Activated T-helper 1 cell treated with anti-CD3 and anti-CD28 coated beads, Interleukin-12 subunit alpha, Interleukin-12 subunit beta, Interleukin-2, Interleukin-4 antibody, amounts not matched to agents 30 ng/mL and 10 ng/mL and 1 ng/mL, durations not matched to agents 14 hours and 24 hours and 36 hours (primary cell): ENCODE measurements at regions of chr4 and their contacts with region 1.

Region 1: DNA sequence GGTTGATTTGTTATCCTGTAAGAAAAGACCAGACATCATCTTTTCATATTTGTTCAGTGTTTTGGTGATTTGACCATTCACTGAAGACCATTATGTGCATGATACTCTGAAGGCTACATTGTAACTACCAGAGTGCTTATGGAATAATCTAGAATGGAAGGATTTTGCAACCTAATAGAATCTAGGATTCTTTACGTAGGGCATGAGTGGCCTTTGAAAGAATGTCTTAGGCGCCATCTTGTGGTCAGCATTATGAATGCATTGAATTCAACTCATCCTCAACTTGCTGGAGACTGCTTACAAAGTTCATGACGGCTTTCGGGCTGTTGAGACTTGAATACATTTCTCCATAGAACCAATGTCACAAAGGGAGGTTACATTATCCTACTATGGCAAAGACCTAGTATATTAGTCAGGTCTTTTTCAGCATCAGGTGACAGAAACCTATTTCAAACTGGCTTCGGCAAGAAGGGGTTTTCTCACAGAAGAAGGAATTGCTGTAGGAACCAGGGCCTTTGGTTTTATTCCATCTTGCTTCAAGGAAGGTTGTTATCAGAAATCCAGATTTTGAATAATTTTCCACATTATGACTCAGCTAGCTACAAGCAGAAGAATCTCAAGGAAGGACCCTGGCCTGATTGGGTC is 104.1 kb downstream of the GPAT3 start:
- DNase-seq: peak; percentile 31
- H3K4me3 Mint-ChIP-seq: no peak overlapping the region
- H3K27ac Mint-ChIP-seq: no peak overlapping the region
- H3K4me1 Mint-ChIP-seq: peaks cover 4% of the 10 kb centered on the region
- H3K27me3 Mint-ChIP-seq: peaks cover 6% of the 10 kb centered on the region

Region 2: DNA sequence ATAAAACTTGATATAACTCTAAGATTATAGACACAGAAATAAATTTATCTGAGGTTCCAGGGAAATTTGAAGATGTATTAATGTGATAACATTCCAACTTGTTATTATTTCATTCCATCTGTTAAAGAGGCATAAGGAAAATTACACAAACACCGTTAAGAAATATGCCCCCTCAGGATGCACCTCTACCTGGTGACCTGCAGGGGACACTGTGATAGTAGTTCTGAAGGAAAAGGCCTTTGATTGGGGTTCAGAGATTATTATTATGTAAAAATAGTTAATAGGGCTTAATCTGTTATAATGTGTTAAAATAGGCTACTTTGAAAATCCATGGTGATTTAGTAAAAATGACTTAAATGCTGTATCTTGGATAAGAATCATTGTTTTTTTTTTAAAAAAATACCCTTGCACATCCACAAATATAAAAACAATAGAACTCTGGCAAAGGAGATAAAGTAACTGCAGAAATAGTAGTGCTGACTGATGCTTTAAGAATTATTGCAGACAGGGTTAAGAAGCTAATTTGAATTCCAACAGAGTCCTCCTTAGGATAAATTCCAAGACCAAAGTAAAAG is 149.0 kb before region 1 on chr4:
- intact Hi-C with region 1: loop called (anchors 1 kb)
- DNase-seq: no peak
- H3K4me3 Mint-ChIP-seq: no peak overlapping the region
- H3K27ac Mint-ChIP-seq: no peak overlapping the region
- H3K4me1 Mint-ChIP-seq: peaks cover 15% of the 10 kb centered on the region
- H3K27me3 Mint-ChIP-seq: peaks cover 7% of the 10 kb centered on the region

Region 3: DNA sequence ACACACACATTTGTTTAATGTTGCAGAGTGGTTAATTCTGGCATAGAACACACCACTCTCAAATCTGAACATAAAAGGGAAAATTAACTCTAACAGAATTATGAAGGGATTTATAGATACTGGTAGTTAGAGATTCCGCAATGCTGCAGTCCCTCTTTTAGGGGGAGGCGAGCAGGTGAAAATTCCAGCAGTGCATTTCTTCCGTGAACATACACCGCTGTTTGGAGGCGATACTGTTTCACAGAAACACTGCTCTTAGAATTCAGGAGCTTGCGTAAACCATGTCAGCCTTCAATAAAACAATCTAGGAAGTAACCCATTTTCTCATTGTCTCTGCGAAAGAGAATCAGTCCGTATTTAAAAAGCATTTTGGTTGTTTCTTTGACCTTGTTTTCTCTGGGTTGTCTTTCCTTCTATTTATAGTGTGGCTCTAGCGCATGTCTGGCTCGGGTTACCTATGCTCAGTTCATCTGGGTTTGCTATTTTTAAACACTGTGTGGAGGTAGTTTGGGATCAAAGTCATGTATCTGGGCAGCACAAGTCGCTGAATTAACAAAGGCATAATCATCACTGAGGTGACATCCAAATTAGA is 13.6 kb before region 1 on chr4:
- intact Hi-C with region 1: no loop called
- DNase-seq: no peak
- H3K4me3 Mint-ChIP-seq: no peak overlapping the region
- H3K27ac Mint-ChIP-seq: no peak overlapping the region
- H3K4me1 Mint-ChIP-seq: no peaks in the 10 kb centered on the region
- H3K27me3 Mint-ChIP-seq: peaks cover 4% of the 10 kb centered on the region

Region 4: GRCh38 chr4:83751336-83751943 is 111.5 kb after region 1 on chr4:
- intact Hi-C with region 1: no loop called
- DNase-seq: no peak
- H3K4me3 Mint-ChIP-seq: no peak overlapping the region
- H3K27ac Mint-ChIP-seq: no peak overlapping the region
- H3K4me1 Mint-ChIP-seq: no peaks in the 10 kb centered on the region
- H3K27me3 Mint-ChIP-seq: peaks cover 5% of the 10 kb centered on the region

Region 5: GRCh38 chr4:84258905-84259830 is 619.2 kb after region 1 on chr4:
- intact Hi-C with region 1: loop called (anchors 1 kb)
- DNase-seq: no peak
- H3K4me3 Mint-ChIP-seq: no peak overlapping the region
- H3K27ac Mint-ChIP-seq: no peak overlapping the region
- H3K4me1 Mint-ChIP-seq: no peaks in the 10 kb centered on the region
- H3K27me3 Mint-ChIP-seq: no peaks in the 10 kb centered on the region

Region 6: DNA sequence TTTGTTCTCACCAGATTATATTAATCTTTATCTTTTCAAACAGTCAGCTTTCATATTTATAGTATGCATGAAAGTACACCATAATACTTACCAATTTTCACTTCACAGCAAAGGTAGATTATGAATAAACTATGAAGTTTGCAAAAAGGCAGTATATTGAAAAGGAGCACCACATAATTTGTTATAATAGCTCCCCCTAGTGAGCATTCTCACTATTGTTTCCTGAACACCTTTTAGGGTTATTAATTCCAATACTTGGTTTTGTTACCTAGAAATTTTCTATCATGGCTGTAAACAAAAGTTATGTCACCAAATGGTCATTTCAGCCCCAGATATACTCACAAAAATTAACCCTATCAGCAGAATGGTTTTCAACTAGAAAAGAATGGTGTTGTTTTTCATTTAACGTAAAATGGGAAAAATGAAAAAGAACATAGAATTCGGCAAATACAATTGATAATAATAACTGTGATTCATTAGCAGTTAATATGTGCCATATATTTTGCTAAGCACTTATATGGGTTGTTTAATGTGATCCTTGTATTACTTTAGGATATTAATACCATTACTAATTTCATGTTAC is 889.3 kb after region 1 on chr4:
- intact Hi-C with region 1: loop called (anchors 1 kb)
- DNase-seq: no peak
- H3K4me3 Mint-ChIP-seq: no peak overlapping the region
- H3K27ac Mint-ChIP-seq: no peak overlapping the region
- H3K4me1 Mint-ChIP-seq: no peaks in the 10 kb centered on the region
- H3K27me3 Mint-ChIP-seq: peaks cover 6% of the 10 kb centered on the region